ENCODE measurements at regions of chr1 and their contacts with region 1.

Region 1: DNA sequence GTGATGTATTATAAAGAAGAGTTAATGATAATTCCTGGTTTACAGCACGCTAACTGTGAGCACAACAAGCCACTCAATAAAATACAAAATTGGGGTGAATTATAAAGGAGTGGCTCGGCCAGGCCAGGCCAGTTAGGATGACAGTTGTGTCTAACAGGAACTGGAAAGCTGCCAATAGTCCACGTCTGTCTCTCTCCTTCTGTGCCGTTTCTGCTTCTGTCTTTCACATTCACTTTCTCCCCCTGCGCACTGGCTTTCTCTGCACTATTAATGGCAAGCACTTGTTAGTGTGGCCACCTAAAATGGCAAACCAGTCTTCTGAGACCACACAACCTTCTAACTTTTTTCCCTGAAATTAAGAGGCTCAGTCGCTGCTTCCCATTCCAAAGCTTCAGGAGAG is 394.3 kb downstream of the NTNG1 start:
- DNase-seq: peak; percentile 31
- H3K4me3 Mint-ChIP-seq: no peak overlapping the region
- H3K27ac Mint-ChIP-seq: peak overlapping the region; percentile 36
- H3K4me1 Mint-ChIP-seq: peaks cover 42% of the 10 kb centered on the region
- H3K27me3 Mint-ChIP-seq: no peaks in the 10 kb centered on the region
- CTCF ChIP-seq: no peak

Region 2: GRCh38 chr1:107547363-107548155 is 12.5 kb after region 1 on chr1:
- CTCF ChIA-PET with region 1: interaction called, 16 read pairs
- POLR2A ChIA-PET with region 1: interaction called, 9 read pairs
- intact Hi-C with region 1: no loop called
- DNase-seq: peak; percentile 55
- H3K4me3 Mint-ChIP-seq: no peak overlapping the region
- H3K27ac Mint-ChIP-seq: no peak overlapping the region
- H3K4me1 Mint-ChIP-seq: peaks cover 6% of the 10 kb centered on the region
- H3K27me3 Mint-ChIP-seq: no peaks in the 10 kb centered on the region
- CTCF ChIP-seq: no peak

Region 3: DNA sequence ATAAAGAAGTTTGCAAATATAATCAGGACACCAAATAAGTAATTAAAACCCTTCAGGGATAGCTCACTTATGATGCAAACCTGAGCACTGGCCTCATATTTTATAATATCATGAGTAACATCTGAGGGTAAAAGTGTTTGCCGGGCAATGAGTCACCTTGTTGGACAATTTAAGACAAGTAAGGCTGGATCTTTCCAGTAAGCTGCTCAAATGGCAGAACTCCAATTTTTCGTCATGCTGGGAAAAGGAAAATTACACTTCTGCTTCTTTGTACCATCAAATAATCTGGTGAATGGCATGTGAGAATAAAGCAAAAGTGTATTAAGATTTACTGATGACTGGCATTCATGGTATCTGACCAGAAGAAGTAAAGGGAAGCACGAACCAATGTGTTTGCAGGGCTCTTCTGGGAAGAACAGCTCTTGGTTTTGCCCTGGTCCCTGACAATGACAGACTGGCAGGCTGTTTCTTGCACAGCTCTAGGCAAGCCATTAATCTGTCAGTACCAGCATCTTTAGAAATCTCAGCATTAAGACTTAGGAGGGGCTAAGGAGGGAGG is 37.6 kb after region 1 on chr1:
- CTCF ChIA-PET with region 1: interaction called, 8 read pairs
- POLR2A ChIA-PET with region 1: interaction called, 45 read pairs
- intact Hi-C with region 1: no loop called
- DNase-seq: peak; percentile 95
- H3K4me3 Mint-ChIP-seq: no peak overlapping the region
- H3K27ac Mint-ChIP-seq: peak overlapping the region; percentile 75
- H3K4me1 Mint-ChIP-seq: peaks cover 26% of the 10 kb centered on the region
- H3K27me3 Mint-ChIP-seq: no peaks in the 10 kb centered on the region
- CTCF ChIP-seq: no peak